T-cell (primary cell): ENCODE measurements at regions of chr1 and their contacts with region 1.

Region 1: DNA sequence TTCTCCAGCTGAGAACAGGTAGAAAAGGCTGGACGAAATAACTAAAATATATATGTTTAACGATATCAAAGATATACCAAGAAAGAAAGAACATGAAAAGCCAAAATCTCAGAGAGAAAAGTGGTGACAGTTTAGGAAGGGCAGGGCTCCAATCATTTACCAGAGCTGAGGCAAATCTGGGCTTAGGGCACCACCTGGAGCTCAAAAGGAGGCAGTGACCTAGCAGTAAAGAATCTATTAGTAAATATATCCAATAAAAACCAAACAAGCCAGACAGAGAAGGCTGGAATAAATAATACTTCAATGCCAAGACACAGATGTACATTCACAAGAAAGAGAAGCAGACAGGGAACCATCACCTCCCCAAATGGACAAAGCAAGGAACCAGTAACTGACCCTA is 43.5 kb downstream of the CHIA start:
- DNase-seq: peak in 32 of 35 experiments; percentile 31 to 83 (median 53)
- ATAC-seq: peak; percentile 68 to 84 (median 81)
- H3K4me3 ChIP-seq: no peak overlapping the region
- H3K4me3 Mint-ChIP-seq: no peak overlapping the region
- H3K27ac ChIP-seq: no peak overlapping the region
- H3K27ac Mint-ChIP-seq: peak overlapping the region; percentile 5 to 52
- H3K4me1 ChIP-seq: peaks cover 0 to 6% of the 10 kb centered on the region in 2 experiments
- H3K4me1 Mint-ChIP-seq: peaks cover 8 to 12% (median 11%) of the 10 kb centered on the region in 3 donors
- H3K27me3 ChIP-seq: no peaks in the 10 kb centered on the region
- H3K27me3 Mint-ChIP-seq: no peaks in the 10 kb centered on the region

Region 2: DNA sequence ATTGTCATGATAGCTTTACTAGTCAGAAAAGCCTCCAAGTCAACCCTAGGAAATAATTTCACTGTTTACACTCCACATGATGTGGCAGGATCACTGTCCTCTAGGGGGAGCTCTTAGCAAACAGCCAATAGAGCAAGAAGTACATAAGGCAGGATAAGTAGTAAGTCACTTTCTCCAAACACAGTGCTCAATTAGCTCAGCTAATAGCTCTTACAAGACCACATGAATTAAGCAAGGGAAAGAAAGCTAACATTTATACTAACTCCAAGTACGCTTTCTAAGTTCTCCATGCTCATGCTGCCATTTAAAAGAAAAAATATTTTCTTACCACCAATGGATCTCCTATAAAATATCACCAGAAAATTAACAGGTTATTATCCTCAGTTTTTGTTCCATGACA is 303.6 kb before region 1 on chr1:
- CTCF ChIA-PET with region 1: interaction called, 5 to 11 read pairs
- POLR2A ChIA-PET with region 1: no interaction called
- DNase-seq: peak in 29 of 35 experiments; percentile 3 to 77 (median 35)
- ATAC-seq: peak; percentile 50 to 71 (median 61)
- H3K4me3 ChIP-seq: no peak overlapping the region
- H3K4me3 Mint-ChIP-seq: no peak overlapping the region
- H3K27ac ChIP-seq: no peak overlapping the region
- H3K27ac Mint-ChIP-seq: no peak overlapping the region
- H3K4me1 ChIP-seq: no peaks in the 10 kb centered on the region
- H3K4me1 Mint-ChIP-seq: peaks cover 0 to 7% (median 0%) of the 10 kb centered on the region in 3 donors
- H3K27me3 ChIP-seq: peaks cover 0 to 2% of the 10 kb centered on the region in 2 experiments
- H3K27me3 Mint-ChIP-seq: peaks cover 10 to 11% of the 10 kb centered on the region in 2 donors

Region 3: GRCh38 chr1:111222308-111223125 is 111.7 kb before region 1 on chr1:
- CTCF ChIA-PET with region 1: interaction called, 4 to 13 read pairs
- POLR2A ChIA-PET with region 1: no interaction called
- DNase-seq: peak in 34 of 35 experiments; percentile 32 to 89 (median 66)
- ATAC-seq: peak; percentile 27 to 41 (median 34)
- H3K4me3 ChIP-seq: peak overlapping the region; percentile 37 to 39
- H3K4me3 Mint-ChIP-seq: peak overlapping the region; percentile 71 to 81 (median 73)
- H3K27ac ChIP-seq: peak overlapping the region; percentile 87
- H3K27ac Mint-ChIP-seq: peak overlapping the region; percentile 95 to 96
- H3K4me1 ChIP-seq: peaks cover 88 to 89% of the 10 kb centered on the region in 2 experiments
- H3K4me1 Mint-ChIP-seq: peaks cover 94 to 100% (median 94%) of the 10 kb centered on the region in 3 donors
- H3K27me3 ChIP-seq: no peaks in the 10 kb centered on the region
- H3K27me3 Mint-ChIP-seq: no peaks in the 10 kb centered on the region

Region 4: GRCh38 chr1:111346089-111346885 is 12.1 kb after region 1 on chr1:
- CTCF ChIA-PET with region 1: interaction called in 1 of 2 experiments, 4 read pairs
- POLR2A ChIA-PET with region 1: interaction called in 1 of 2 experiments, 16 read pairs
- DNase-seq: peak; percentile 73 to 96 (median 87)
- ATAC-seq: peak; percentile 90 to 95 (median 91)
- H3K4me3 ChIP-seq: peak overlapping the region; percentile 59 to 71
- H3K4me3 Mint-ChIP-seq: peak overlapping the region; percentile 80 to 87 (median 85)
- H3K27ac ChIP-seq: peak overlapping the region; percentile 66
- H3K27ac Mint-ChIP-seq: peak overlapping the region; percentile 83 to 90
- H3K4me1 ChIP-seq: peaks cover 0 to 11% of the 10 kb centered on the region in 2 experiments
- H3K4me1 Mint-ChIP-seq: peaks cover 27% of the 10 kb centered on the region in 3 donors
- H3K27me3 ChIP-seq: no peaks in the 10 kb centered on the region
- H3K27me3 Mint-ChIP-seq: no peaks in the 10 kb centered on the region